Tibial artery (tissue), 4 donors: ENCODE measurements at regions of chr4 and their contacts with region 1.

Region 1: GRCh38 chr4:128524311-128524710 is 236.7 kb upstream of the PGRMC2 start:
- DNase-seq: peak; percentile 67 to 90
- H3K4me3 ChIP-seq: no peak overlapping the region
- H3K27ac ChIP-seq: peak overlapping the region; percentile 75 to 83
- H3K4me1 ChIP-seq: peaks cover 0 to 79% (median 53%) of the 10 kb centered on the region in 4 donors
- H3K27me3 ChIP-seq: no peaks in the 10 kb centered on the region
- CTCF ChIP-seq: no peak

Region 2: GRCh38 chr4:128468123-128468989 is 56.0 kb before region 1 on chr4:
- intact Hi-C with region 1: loop called (anchors 5 kb)
- DNase-seq: peak; percentile 83 to 86
- H3K4me3 ChIP-seq: peak overlapping the region in 1 of 2 donors; percentile 9
- H3K27ac ChIP-seq: peak overlapping the region; percentile 65 to 70
- H3K4me1 ChIP-seq: peaks cover 0 to 23% (median 16%) of the 10 kb centered on the region in 4 donors
- H3K27me3 ChIP-seq: no peaks in the 10 kb centered on the region
- CTCF ChIP-seq: peak in 1 of 2 experiments; percentile 12